Right ventricle myocardium superior (tissue), 1 donor: ENCODE measurements at regions of chr1 and their contacts with region 1.

Region 1: DNA sequence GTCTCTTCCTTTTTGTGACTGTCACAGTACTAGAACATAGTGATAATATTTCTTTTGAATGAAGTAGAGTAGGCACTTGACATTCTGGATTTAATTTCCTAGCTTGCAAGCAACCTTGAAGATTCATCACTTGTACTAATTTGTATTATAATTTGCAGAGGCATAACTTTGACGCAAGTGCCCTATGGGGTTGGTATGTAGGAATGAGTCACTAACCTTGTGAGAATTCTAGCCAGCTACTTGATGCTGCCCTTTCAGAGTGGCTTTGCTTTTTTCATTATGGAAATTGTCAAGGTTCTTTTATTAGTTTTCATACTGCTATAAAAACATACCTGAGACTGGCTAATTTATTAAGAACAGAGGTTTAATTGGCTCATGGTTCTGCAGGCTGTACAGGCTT is 13.7 kb upstream of the DPH5 start:
- DNase-seq: no peak
- ATAC-seq: no peak

Region 2: DNA sequence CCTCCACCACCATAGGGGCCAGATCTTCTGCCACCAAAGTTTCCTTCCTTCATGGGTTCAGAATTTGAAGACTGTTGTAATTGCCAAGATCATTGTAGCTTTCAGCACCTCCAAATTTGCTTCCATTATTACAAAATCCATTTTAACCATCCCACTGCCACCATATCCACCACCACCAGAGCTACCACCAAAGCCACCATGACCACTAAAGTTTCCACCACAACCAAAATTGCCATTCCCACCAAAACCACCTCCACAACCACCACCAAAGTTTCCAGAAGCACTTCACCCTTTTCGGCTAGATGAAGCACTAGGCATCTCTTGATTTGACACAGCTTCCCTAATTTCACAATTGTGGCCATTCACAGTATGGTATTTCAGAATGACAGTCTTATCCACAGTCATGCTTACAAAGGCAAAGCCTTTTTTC is 98.1 kb before region 1 on chr1:
- intact Hi-C with region 1: no loop called
- DNase-seq: no peak
- ATAC-seq: no peak

Region 3: DNA sequence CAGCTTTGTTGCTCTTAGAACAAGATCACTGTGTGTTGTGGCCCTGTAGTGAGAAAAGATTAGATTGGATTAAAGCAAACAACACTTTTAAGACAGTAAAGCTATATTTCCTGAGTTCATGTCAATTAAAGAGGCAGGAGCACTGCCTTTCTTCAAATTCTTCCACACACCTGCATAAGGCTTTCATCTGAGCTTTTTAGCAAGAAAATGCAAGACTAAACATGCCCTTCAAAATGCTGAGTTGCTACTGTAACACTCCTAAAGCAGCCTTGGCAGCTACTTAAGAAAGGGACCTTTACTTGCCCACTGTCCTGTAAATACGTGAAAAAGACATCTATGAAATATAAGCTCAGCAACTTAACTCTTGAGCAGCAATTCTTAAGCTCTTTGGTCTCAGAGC is 25.5 kb before region 1 on chr1:
- intact Hi-C with region 1: no loop called
- DNase-seq: no peak
- ATAC-seq: no peak

Region 4: DNA sequence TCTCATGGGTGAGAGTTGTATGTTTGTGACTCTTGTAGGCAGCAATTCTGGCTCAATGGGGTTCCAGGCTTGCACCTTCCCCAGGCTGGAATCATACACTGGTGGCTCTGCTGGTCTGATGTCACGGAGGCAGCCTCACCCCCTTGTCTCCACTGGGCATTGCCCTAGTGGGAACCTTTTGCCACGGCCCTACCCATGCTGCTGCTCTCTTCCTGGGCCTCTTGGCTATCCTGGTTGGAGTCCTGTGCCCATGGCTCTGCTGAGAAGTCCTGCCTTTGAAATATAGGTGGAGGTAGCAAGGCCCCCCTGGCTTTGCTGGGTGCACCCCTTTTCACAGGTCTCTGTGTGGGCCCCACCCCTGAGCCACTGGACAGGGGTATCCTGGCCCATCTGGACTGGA is 56.3 kb after region 1 on chr1:
- intact Hi-C with region 1: loop called (anchors 2 kb)
- DNase-seq: no peak
- ATAC-seq: no peak